ENCODE measurements at regions of chr2 and their contacts with region 1.

Region 1: DNA sequence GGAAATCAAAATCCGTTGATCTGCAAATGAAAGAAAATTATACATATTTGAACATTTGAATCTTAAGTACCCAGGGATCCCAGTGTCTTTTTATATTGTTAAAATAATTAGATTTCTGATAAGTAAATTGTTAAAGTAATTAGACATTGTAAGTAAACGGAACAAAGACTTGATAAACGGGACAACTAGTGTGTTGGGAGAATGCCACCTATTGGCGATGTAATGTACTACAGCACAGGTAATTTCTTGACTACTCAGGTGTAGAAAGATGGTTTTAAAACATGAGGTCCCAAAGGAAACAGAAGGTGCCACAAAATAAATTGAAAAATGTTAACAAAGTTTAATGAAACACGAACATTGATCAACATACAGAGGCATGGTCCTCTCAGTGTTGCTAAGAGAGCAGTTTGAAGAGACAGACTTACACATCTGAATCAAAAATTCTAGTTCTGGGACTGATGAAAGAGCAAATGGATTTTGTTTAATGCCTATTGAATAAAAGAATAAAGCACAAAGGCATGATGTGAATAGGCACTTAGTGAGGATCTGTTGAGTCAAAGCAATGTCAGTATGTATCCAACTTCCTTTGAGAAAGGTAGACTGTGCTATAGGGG is 103.4 kb upstream of the RASGRP3 start:
- DNase-seq: no peak
- ATAC-seq: no peak

Region 2: DNA sequence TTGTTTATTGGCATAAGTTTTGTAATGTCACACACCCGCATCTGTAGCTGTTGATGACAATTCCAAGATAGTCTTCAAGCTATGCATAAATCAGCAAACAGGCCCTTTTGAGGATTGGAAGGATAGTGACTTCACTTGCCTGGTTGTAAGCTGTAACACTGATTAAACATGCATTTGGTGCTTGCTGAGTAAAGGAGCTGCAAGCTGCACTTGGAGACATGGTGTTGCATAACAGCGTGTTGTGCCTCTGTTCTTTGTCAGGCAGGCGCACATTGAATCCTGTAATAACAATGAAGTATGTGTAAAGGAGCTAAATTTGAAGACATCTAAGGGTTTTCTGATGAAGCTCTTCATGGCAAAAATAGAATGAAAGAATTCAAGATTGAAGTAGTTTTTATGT is 813.9 kb before region 1 on chr2:
- intact Hi-C with region 1: loop called in 1 of 2 experiments (anchors 5 kb)
- DNase-seq: no peak
- ATAC-seq: peak in 1 of 2 donors; percentile 73

Measured in left cardiac atrium (tissue), 4 donors.